A673 (cell line): ENCODE measurements at regions of chr6 and their contacts with region 1.

Region 1: GRCh38 chr6:28940858-28941680 is 17.3 kb upstream of the TRIM27 start:
- DNase-seq: peak; percentile 93
- H3K4me3 ChIP-seq: peak overlapping the region; percentile 65
- H3K27ac ChIP-seq: peak overlapping the region; percentile 58
- H3K4me1 ChIP-seq: peaks cover 8% of the 10 kb centered on the region
- H3K27me3 ChIP-seq: no peaks in the 10 kb centered on the region
- CTCF ChIP-seq: no peak

Region 2: GRCh38 chr6:27503436-27504030 is 1437.5 kb before region 1 on chr6:
- CTCF ChIA-PET with region 1: no interaction called
- POLR2A ChIA-PET with region 1: no interaction called
- intact Hi-C with region 1: no loop called
- DNase-seq: peak; percentile 85
- H3K4me3 ChIP-seq: peak overlapping the region; percentile 56
- H3K27ac ChIP-seq: no peak overlapping the region
- H3K4me1 ChIP-seq: no peaks in the 10 kb centered on the region
- H3K27me3 ChIP-seq: no peaks in the 10 kb centered on the region
- CTCF ChIP-seq: no peak

Region 3: DNA sequence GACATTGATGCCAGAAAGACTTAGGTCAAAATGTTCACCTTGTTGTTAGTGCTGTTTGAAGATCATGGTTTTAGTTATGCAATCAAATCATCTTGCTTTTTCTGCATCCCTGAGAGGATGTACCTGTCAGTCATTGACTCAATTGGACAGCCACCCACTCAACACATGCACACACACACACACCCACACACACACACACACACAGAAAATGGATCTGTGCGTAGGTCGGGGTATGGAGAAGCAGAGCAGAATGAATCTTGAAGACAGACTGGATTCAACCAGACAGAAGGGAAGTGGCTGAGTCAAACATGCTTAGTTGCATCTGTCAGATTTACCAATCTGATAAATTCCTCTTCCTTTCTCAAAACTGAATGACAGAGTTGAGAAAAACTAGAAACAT is 478.7 kb before region 1 on chr6:
- CTCF ChIA-PET with region 1: no interaction called
- POLR2A ChIA-PET with region 1: interaction called, 10 read pairs
- intact Hi-C with region 1: no loop called
- DNase-seq: no peak
- H3K4me3 ChIP-seq: no peak overlapping the region
- H3K27ac ChIP-seq: no peak overlapping the region
- H3K4me1 ChIP-seq: no peaks in the 10 kb centered on the region
- H3K27me3 ChIP-seq: peaks cover 20% of the 10 kb centered on the region
- CTCF ChIP-seq: no peak

Region 4: GRCh38 chr6:28747631-28748157 is 193.4 kb before region 1 on chr6:
- CTCF ChIA-PET with region 1: no interaction called
- POLR2A ChIA-PET with region 1: no interaction called
- intact Hi-C with region 1: loop called (anchors 10 kb)
- DNase-seq: peak; percentile 97
- H3K4me3 ChIP-seq: peak overlapping the region; percentile 42
- H3K27ac ChIP-seq: no peak overlapping the region
- H3K4me1 ChIP-seq: no peaks in the 10 kb centered on the region
- H3K27me3 ChIP-seq: no peaks in the 10 kb centered on the region
- CTCF ChIP-seq: no peak

Region 5: GRCh38 chr6:28758046-28758817 is 182.8 kb before region 1 on chr6:
- CTCF ChIA-PET with region 1: no interaction called
- POLR2A ChIA-PET with region 1: no interaction called
- intact Hi-C with region 1: no loop called
- DNase-seq: peak; percentile 89
- H3K4me3 ChIP-seq: peak overlapping the region; percentile 44
- H3K27ac ChIP-seq: no peak overlapping the region
- H3K4me1 ChIP-seq: no peaks in the 10 kb centered on the region
- H3K27me3 ChIP-seq: no peaks in the 10 kb centered on the region
- CTCF ChIP-seq: no peak

Region 6: GRCh38 chr6:28807682-28808280 is 133.3 kb before region 1 on chr6:
- CTCF ChIA-PET with region 1: no interaction called
- POLR2A ChIA-PET with region 1: no interaction called
- intact Hi-C with region 1: loop called (anchors 5 kb)
- DNase-seq: peak; percentile 88
- H3K4me3 ChIP-seq: peak overlapping the region; percentile 55
- H3K27ac ChIP-seq: no peak overlapping the region
- H3K4me1 ChIP-seq: peaks cover 14% of the 10 kb centered on the region
- H3K27me3 ChIP-seq: no peaks in the 10 kb centered on the region
- CTCF ChIP-seq: no peak

Region 7: DNA sequence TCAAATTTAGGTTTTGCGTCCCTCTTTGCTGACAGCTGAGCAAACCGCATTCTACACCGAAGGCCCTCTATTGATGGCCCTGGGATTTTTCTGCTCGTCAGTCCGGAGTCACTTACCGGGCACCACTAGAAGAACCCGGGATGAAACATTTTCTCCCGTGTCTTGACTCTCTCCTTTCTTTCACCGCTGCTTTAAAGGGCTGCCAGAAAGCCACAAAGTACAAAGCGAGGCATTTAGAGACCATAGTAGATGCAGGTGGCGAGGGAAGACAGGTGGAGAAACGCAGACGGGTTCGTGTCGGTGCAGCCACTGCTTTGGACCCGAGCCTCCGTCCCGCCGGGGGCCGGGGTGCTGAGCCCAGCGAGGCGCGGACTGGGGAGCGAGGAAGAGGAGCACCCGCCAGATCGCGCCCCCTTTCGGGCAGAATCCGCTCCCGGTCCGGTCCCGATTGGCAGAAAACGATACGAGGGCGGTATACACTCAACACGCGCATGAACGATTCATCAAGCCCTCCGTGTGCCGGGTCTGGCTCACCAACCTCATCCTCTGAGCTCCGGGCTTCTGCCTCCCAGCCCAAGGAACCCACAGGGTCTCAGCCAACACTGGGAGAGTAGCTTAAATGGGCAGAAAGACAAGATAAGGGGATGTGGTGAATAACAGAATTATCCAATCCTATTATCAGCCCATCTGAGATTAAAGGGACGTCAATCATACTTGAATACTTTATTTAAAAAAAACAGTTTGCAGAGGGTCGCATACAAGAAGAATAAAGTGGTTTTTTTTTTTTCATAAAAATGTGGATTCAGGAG is 102.2 kb before region 1 on chr6:
- CTCF ChIA-PET with region 1: no interaction called
- POLR2A ChIA-PET with region 1: no interaction called
- intact Hi-C with region 1: loop called (anchors 1 kb)
- DNase-seq: peak; percentile 93
- H3K4me3 ChIP-seq: peak overlapping the region; percentile 83
- H3K27ac ChIP-seq: peak overlapping the region; percentile 79
- H3K4me1 ChIP-seq: no peaks in the 10 kb centered on the region
- H3K27me3 ChIP-seq: no peaks in the 10 kb centered on the region
- CTCF ChIP-seq: peak; percentile 84

Region 8: DNA sequence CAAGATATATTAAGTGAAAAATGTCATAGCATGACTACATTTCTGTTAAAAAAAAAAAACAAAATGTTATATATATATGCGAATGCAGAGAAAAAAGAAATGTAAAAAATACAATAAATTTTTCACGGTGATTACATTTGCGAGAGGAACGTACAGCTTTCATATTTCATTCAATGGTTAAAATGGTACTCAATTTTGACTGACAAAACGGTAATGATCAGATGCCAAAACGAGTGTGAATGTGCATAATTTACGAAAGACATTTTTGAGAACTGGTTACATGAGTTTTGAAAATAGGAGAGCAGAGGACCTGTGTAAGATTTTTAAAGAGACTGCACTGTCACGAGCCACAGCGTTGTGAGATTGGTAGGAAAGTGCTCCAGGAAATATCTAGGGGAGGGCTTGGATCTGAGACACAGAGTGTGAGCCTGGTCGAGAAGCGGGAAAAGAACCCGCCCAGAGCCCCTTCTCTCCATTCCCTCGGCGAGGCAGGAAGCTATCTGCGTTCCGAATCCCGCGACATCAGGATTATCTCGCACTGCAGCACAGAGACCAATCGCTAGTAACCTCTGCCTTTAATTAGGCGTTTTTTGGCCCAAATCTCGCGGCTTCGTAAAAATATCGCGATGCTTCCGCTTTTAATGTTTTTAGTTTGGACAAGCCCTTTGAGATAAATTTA is 45.8 kb before region 1 on chr6:
- CTCF ChIA-PET with region 1: no interaction called
- POLR2A ChIA-PET with region 1: no interaction called
- intact Hi-C with region 1: loop called (anchors 1 kb)
- DNase-seq: peak; percentile 97
- H3K4me3 ChIP-seq: peak overlapping the region; percentile 68
- H3K27ac ChIP-seq: peak overlapping the region; percentile 97
- H3K4me1 ChIP-seq: peaks cover 5% of the 10 kb centered on the region
- H3K27me3 ChIP-seq: no peaks in the 10 kb centered on the region
- CTCF ChIP-seq: no peak

Region 9: GRCh38 chr6:28981833-28982475 is 40.9 kb after region 1 on chr6:
- CTCF ChIA-PET with region 1: no interaction called
- POLR2A ChIA-PET with region 1: interaction called, 5 read pairs
- intact Hi-C with region 1: loop called (anchors 1 kb)
- DNase-seq: peak; percentile 90
- H3K4me3 ChIP-seq: peak overlapping the region; percentile 59
- H3K27ac ChIP-seq: peak overlapping the region; percentile 73
- H3K4me1 ChIP-seq: peaks cover 32% of the 10 kb centered on the region
- H3K27me3 ChIP-seq: no peaks in the 10 kb centered on the region
- CTCF ChIP-seq: no peak

Region 10: DNA sequence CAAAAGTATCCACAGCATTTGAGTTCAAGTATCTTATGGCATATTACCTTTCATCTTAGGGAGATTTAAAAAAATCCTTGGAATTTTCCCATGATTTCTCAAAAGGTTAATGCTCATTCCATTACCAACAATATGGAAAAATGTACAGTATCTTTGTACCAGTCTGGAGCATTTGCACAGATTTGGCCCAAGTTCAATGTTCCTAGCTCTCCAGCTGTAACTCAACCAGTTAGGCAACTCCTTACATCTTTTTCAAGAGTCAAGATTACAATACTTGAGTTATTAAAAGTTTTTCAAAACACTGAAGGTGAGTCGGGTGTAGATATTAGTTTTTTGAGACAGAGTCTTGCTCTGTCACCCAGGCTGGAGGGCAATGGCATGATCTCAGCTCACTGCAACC is 230.7 kb after region 1 on chr6:
- CTCF ChIA-PET with region 1: no interaction called
- POLR2A ChIA-PET with region 1: no interaction called
- intact Hi-C with region 1: no loop called
- DNase-seq: no peak
- H3K4me3 ChIP-seq: no peak overlapping the region
- H3K27ac ChIP-seq: no peak overlapping the region
- H3K4me1 ChIP-seq: no peaks in the 10 kb centered on the region
- H3K27me3 ChIP-seq: peaks cover 32% of the 10 kb centered on the region
- CTCF ChIP-seq: no peak